Breast epithelium (tissue), 4 donors: ENCODE measurements at regions of chr12 and their contacts with region 1.

Region 1: DNA sequence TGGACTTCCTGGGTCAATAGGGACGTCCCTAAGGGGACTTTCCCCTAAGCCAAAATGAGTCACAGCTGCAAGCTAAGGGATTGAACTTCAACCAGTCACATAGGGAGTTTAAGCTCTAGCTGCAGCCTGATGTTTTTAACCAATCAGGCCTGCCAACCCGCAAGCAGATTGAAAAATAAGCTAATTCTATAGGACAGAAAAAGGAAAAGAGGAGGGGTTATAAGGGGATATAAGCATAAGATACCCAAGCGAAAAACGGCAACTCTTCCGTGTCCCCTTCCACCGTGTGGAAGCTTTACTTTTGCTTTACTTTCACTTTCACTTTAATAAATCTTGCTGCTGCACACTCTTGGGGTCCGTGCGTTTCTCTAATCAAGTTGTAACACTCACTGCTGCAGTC is 24.4 kb downstream of the ATP23 start:
- DNase-seq: no peak
- H3K4me3 ChIP-seq: no peak overlapping the region
- H3K27ac ChIP-seq: no peak overlapping the region
- H3K4me1 ChIP-seq: no peaks in the 10 kb centered on the region
- H3K27me3 ChIP-seq: no peaks in the 10 kb centered on the region
- CTCF ChIP-seq: no peak
- POLR2A ChIP-seq: no peak

Region 2: GRCh38 chr12:57765042-57765697 is 200.6 kb before region 1 on chr12:
- intact Hi-C with region 1: no loop called
- DNase-seq: peak in 1 of 2 donors; percentile 54
- H3K4me3 ChIP-seq: peak overlapping the region; percentile 5 to 63 (median 56)
- H3K27ac ChIP-seq: no peak overlapping the region
- H3K4me1 ChIP-seq: peaks cover 0 to 8% of the 10 kb centered on the region in 2 donors
- H3K27me3 ChIP-seq: peaks cover 0 to 25% of the 10 kb centered on the region in 2 donors
- CTCF ChIP-seq: peak in 2 of 3 donors; percentile 22 to 23
- POLR2A ChIP-seq: no peak

Region 3: DNA sequence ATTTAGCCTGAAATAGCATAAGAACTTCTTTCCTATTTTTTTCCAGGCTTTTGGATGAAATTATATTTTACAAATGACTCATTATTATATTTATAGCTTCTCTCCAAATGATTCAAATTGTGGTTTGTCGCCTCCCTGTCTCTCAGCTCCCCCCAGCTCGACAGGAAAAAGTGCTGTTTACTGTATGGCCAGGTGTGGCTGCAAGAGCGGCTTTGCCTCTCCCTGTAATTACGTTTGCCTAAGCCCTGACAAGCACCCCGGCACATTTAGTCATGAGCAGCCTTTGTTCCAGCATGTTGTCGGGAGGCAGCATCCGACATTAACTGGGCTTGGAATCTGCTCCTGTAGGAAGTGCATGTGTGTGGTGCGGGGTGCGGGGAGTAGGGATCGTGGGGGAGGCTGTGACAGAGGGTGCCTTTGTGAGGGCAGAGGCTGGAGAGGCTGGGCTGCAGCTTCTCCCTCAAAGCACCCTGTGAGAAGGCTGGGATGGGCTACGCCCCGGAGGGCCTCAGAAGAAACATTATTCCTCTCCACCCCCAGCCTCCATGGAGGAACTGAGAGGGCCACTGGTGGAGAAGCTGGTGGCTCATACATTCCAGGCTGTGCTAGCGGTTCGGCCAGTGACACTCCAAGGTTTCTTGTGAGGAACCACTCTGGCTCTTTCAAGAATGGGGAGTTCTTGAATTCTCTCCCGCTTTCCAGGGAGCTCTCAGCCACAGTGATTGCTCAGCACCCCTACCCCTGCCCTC is 77.2 kb before region 1 on chr12:
- intact Hi-C with region 1: no loop called
- DNase-seq: peak in 1 of 2 donors; percentile 66
- H3K4me3 ChIP-seq: peak overlapping the region in 1 of 3 donors; percentile 36
- H3K27ac ChIP-seq: peak overlapping the region; percentile 86 to 95
- H3K4me1 ChIP-seq: peaks cover 24 to 26% of the 10 kb centered on the region in 2 donors
- H3K27me3 ChIP-seq: no peaks in the 10 kb centered on the region
- CTCF ChIP-seq: no peak
- POLR2A ChIP-seq: no peak

Region 4: GRCh38 chr12:59023861-59024424 is 1058.2 kb after region 1 on chr12:
- intact Hi-C with region 1: loop called (anchors 5 kb)
- DNase-seq: no peak
- H3K4me3 ChIP-seq: no peak overlapping the region
- H3K27ac ChIP-seq: peak overlapping the region; percentile 26 to 56
- H3K4me1 ChIP-seq: no peaks in the 10 kb centered on the region
- H3K27me3 ChIP-seq: no peaks in the 10 kb centered on the region
- CTCF ChIP-seq: no peak
- POLR2A ChIP-seq: no peak